ENCODE measurements at regions of chr3 and their contacts with region 1.

Region 1: GRCh38 chr3:152471814-152472671 is 203.3 kb downstream of the MBNL1 start:
- DNase-seq: peak; percentile 46
- CTCF ChIP-seq: peak; percentile 71

Region 2: DNA sequence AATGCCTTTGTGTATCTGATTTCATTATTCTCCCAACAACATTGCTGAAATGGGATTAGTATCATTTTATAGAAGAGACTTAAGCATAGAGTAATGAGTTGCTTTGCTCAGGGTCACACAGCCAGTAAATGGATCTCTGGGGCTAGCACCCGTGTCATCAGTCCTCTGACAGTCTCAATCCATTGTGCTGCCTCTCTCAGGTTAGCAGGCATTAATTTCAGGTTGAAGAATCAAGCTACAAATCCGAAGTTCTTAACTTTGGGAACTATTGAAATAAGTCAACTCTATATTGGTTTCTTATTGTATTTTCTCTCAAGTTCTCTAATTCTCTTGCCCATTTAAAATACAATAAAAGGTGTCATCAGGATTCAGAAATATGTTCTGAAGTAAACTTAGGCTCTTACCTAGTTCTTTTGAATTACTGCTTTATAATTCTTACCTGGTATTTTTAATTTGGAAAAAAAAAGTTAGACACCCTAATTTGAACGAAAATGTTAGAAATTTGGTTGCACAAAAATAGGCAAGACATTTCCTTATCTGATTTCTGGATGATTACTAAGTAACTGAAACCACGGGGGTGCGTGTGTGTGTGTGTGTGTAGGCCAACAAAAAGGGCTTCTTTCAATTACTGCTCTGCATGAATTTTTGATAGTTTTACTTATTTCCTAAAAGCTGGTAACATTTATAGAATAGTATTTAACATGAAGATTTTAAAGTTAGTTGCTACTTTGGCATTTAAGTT is 13.5 kb before region 1 on chr3:
- CTCF ChIA-PET with region 1: interaction called, 16 read pairs
- POLR2A ChIA-PET with region 1: no interaction called
- DNase-seq: no peak
- CTCF ChIP-seq: no peak

Region 3: DNA sequence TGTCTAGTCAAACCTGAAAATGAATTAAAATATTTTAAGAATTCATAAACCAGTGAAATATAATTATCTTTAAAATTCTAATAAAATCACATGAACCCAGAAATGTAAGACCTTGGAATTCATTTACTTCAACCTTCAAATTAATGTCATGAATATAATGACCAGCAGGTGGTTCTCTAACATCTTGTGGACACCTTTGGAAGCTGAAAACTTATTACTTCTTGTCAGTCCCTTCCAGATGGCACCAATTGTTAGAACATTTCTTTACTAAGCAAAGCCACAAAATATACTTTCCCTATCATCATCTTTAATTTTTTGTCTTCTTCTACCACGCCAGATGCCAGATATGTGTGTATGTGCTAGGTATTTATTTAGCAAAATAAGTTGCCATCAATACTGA is 36.7 kb after region 1 on chr3:
- CTCF ChIA-PET with region 1: interaction called, 16 read pairs
- POLR2A ChIA-PET with region 1: interaction called, 4 read pairs
- DNase-seq: no peak
- CTCF ChIP-seq: peak; percentile 37

Region 4: DNA sequence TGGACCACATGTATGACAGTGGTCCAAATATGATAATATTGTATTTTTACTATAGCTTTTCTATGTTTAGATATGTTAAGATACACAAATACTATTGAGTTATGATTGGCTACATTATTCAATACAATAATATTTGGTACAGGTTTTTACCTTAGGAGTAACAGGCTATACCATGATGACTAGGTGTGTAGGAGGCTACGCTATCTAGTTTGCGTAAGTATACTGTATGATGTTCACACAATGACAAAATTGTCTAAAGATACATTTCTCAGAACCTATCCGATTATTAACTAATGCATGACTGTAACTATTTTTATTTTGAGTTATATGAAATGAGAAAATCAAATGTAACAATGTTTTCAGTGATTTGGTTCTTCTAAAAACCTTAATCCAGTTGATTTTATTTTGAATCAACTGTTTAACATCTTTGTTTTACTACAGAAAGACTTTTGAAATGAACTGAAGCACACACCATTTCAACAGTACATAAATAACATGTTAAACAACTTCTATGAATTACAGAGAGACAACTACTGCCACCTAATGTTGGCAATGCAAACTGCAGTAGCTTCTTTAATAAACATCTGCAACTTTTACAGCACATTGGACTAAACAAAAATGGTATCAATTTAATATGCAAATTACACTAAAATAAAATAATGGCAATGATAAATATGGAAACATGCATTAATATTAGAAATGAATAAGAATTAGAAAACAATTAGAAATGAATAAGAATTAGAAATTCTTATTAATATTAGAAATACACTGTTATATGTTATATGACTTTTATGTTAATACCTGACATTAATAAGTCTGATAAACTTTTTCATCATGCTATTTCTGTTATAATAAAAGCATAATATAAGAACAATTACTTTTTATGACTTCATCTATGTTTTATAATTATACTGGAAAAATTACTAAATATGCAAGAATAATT is 52.4 kb after region 1 on chr3:
- CTCF ChIA-PET with region 1: interaction called, 36 read pairs
- POLR2A ChIA-PET with region 1: no interaction called
- DNase-seq: no peak
- CTCF ChIP-seq: peak; percentile 80

Measured in GM10248 (cell line).